AG04449 (cell line): ENCODE measurements at regions of chr17 and their contacts with region 1.

Region 1: GRCh38 chr17:42760652-42761581 is at the start of gene RAMP2:
- DNase-seq: no peak
- H3K4me3 ChIP-seq: peak within 1 kb of the TSS; percentile 50
- CTCF ChIP-seq: no peak

Region 2: DNA sequence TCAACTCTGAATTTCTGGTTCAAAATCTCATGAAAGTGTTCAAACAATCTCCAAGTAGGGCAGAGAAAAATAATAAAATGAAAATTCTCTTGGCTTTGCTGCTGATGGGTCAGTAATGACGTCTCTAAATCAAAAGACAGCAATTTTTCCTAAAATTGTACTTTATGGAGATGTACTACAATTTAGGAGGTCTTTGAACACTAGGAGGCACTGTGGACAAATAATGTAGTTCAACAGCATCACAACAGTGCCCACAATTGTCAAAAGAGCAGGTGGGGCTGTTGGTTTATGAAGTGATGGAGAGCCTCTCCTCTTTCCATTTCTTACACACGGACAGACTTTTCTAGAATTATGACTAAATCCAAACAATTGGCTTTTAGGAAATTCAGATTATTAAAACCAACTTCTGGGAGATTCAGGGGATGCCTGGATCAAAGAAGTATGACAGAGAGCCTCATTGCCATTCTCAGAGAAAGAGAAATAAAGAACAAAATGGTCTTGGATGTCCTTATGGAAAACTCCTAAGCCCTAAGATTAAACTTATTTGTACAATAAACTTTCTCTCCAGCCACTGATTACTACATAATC is 39.8 kb before region 1 on chr17:
- CTCF ChIA-PET with region 1: interaction called, 15 read pairs
- POLR2A ChIA-PET with region 1: no interaction called
- DNase-seq: no peak
- H3K4me3 ChIP-seq: no peak overlapping the region
- CTCF ChIP-seq: peak; percentile 57

Region 3: DNA sequence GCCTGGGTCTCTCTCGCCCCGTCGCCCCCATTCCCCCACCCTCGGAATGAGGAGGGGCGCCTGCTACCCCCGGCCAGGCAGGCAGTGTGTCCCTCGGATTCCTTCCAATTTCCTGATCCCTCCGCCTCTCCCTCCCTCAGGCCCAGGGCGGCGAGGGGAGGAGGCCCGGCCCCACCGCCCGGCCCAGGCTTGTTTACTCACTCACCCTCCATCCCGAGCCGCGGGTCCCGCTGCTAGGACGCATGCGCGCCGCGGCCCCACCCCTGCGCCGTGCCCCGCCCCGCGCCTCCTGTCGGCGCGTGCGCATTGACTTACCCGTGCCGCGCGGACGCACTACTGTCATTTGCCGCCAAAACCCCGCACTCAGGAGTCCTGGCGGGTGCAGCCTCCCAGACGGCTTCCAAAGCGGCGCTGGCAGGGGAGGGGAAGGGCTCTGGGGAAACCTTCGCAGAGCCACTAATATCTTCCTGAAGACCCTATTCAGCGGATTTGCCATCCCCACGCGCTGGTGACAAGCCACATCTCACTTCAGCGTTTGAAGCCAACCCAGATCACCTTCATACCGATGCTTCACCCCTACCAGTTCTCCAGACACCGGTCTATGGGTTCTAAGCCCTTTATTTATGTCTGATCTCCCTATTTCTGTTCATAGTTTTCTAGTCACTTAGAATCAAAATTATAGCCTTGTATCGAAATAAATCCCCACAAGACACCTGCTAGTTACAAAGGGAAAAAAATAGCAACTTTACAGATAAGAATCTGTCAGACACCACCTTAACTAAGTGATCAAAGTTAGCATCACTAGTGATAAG is 15.9 kb before region 1 on chr17 and contains the start of gene EZH1:
- CTCF ChIA-PET with region 1: interaction called, 35 read pairs
- POLR2A ChIA-PET with region 1: no interaction called
- DNase-seq: peak; percentile 17
- H3K4me3 ChIP-seq: peak within 1 kb of the TSS; percentile 86
- CTCF ChIP-seq: no peak

Region 4: DNA sequence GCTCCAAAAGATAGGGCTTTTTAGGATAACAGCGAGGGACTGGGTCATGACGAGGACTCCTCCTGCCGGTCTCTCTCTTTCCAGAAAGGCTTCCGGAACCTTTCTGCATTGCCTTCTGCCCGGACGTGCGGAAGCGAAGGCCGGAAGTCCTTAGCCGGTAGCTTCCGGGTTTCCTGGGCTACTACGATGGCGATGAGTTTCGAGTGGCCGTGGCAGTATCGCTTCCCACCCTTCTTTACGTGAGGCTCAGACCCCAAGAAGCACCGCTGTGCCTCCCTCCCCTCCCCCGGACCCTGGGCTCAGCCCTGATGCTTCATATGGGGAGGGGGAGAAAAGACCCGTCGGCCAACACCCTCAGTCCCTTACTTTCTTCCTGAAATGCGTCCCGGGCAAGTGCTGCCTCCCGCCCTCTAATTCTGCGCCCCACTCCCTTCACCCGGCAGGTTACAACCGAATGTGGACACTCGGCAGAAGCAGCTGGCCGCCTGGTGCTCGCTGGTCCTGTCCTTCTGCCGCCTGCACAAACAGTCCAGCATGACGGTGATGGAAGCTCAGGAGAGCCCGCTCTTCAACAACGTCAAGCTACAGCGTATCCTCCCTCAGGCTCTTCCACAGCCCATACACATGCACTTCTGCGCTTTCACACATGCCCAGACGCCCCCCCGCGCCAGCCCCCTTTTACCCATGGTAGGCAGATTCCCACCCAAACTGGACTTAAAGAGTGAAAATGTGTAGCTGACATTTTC is 12.5 kb after region 1 on chr17 and contains the start of gene VPS25:
- CTCF ChIA-PET with region 1: interaction called, 94 read pairs
- POLR2A ChIA-PET with region 1: interaction called, 4 read pairs
- DNase-seq: no peak
- H3K4me3 ChIP-seq: peak within 1 kb of the TSS; percentile 91
- CTCF ChIP-seq: peak; percentile 37

Region 5: DNA sequence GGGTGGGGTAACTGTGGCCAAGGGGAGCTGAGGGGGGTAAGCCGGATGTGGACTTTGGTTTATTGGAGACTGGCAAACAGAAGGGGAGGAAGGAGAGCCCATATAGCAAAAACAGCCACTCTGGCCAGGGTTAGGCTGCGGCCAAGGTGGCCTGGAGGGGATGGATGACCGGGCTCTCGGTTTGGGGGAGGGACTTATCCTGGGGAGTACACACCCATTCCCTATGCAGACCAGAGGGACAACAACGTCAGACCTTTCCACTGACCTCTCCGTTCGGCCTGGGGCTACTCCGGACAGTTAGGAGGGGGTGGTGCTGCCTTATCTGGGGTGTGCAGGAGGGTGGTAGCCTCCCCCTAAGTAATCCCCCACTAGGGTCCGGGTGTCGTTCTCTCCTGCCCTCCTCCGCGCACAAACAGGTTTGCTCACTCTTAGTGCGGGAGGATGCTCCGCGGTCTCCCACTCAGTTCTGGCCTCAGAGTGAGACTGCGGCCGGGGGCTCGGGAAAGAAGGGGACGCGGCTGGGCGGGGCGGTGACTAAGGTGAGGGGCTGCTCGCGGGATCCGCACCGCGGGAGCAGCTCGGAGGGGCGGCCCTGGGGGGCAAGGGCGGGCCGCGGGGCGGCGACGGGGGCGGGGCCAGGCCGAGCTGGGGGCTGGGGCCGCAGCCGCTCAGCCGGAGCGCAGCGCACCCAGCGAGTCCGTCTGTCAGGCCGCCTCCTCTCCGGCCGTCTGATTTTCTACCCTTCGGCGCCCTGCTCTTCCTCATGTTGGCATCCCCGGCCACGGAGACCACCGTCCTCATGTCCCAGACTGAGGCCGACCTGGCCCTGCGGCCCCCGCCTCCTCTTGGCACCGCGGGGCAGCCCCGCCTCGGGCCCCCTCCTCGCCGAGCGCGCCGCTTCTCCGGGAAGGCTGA is 19.3 kb after region 1 on chr17 and contains the start of gene WNK4:
- CTCF ChIA-PET with region 1: interaction called, 94 read pairs
- POLR2A ChIA-PET with region 1: no interaction called
- DNase-seq: no peak
- H3K4me3 ChIP-seq: peak within 1 kb of the TSS; percentile 76
- CTCF ChIP-seq: no peak